ENCODE measurements at regions of chr5 and their contacts with region 1.

Region 1: DNA sequence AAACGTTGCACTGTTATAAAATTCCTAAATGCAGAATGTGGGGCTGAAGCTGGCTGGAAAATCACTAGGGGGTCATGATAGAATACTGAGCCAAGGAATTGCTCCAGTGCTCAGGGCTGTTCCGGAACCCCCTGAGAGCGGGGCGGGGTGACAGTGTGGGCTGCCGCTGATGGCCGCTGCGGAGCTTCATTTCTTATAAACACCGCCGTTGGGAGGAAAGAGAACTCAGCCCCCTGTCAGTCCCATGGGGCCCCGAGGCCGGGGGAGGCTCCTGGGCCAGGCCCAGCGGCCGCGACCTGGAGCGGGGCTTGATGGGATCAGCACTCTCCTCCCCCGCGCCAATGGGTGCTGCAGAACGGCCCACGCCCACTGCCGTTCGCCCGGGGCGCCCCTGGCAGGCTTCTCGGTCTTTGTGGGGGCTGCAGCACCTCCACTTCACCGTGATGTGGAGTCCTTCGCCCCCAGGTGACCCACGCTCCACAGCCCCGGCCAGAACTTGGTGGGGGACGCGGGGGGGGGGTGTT is 5.2 kb upstream of the IRF1 start:
- DNase-seq: peak; percentile 50
- H3K4me3 ChIP-seq: peak overlapping the region; percentile 11 to 39 (median 30)
- H3K27ac ChIP-seq: peak overlapping the region; percentile 56
- H3K4me1 ChIP-seq: peaks cover 30% of the 10 kb centered on the region
- H3K27me3 ChIP-seq: no peaks in the 10 kb centered on the region
- CTCF ChIP-seq: no peak
- POLR2A ChIP-seq: peak; percentile 50

Region 2: GRCh38 chr5:131877873-131878272 is 617.9 kb before region 1 on chr5:
- CTCF ChIA-PET with region 1: no interaction called
- POLR2A ChIA-PET with region 1: no interaction called
- dilution Hi-C with region 1: no loop called
- intact Hi-C with region 1: no loop called
- DNase-seq: no peak
- H3K4me3 ChIP-seq: no peak overlapping the region
- H3K27ac ChIP-seq: no peak overlapping the region
- H3K4me1 ChIP-seq: no peaks in the 10 kb centered on the region
- H3K27me3 ChIP-seq: peaks cover 0 to 4% of the 10 kb centered on the region in 2 experiments
- CTCF ChIP-seq: no peak
- POLR2A ChIP-seq: no peak

Region 3: GRCh38 chr5:132086277-132086794 is 409.4 kb before region 1 on chr5:
- CTCF ChIA-PET with region 1: no interaction called
- POLR2A ChIA-PET with region 1: no interaction called
- dilution Hi-C with region 1: no loop called
- intact Hi-C with region 1: loop called (anchors 1 kb)
- DNase-seq: peak; percentile 99
- H3K4me3 ChIP-seq: no peak overlapping the region
- H3K27ac ChIP-seq: peak overlapping the region; percentile 91
- H3K4me1 ChIP-seq: peaks cover 26% of the 10 kb centered on the region
- H3K27me3 ChIP-seq: no peaks in the 10 kb centered on the region
- CTCF ChIP-seq: no peak
- POLR2A ChIP-seq: no peak

Region 4: GRCh38 chr5:132260714-132261551 is 234.8 kb before region 1 on chr5:
- CTCF ChIA-PET with region 1: interaction called, 7 read pairs
- POLR2A ChIA-PET with region 1: no interaction called
- dilution Hi-C with region 1: no loop called
- intact Hi-C with region 1: loop called (anchors 1 kb)
- DNase-seq: peak; percentile 91
- H3K4me3 ChIP-seq: no peak overlapping the region
- H3K27ac ChIP-seq: peak overlapping the region; percentile 96
- H3K4me1 ChIP-seq: peaks cover 76% of the 10 kb centered on the region
- H3K27me3 ChIP-seq: no peaks in the 10 kb centered on the region
- CTCF ChIP-seq: no peak
- POLR2A ChIP-seq: no peak

Region 5: GRCh38 chr5:132419502-132420468 is 75.9 kb before region 1 on chr5:
- CTCF ChIA-PET with region 1: interaction called, 38 read pairs
- POLR2A ChIA-PET with region 1: interaction called, 6 read pairs
- dilution Hi-C with region 1: no loop called
- intact Hi-C with region 1: loop called (anchors 1 kb)
- DNase-seq: peak; percentile 90
- H3K4me3 ChIP-seq: no peak overlapping the region
- H3K27ac ChIP-seq: peak overlapping the region; percentile 6
- H3K4me1 ChIP-seq: peaks cover 41% of the 10 kb centered on the region
- H3K27me3 ChIP-seq: no peaks in the 10 kb centered on the region
- CTCF ChIP-seq: peak; percentile 77 to 83
- POLR2A ChIP-seq: no peak

Region 6: DNA sequence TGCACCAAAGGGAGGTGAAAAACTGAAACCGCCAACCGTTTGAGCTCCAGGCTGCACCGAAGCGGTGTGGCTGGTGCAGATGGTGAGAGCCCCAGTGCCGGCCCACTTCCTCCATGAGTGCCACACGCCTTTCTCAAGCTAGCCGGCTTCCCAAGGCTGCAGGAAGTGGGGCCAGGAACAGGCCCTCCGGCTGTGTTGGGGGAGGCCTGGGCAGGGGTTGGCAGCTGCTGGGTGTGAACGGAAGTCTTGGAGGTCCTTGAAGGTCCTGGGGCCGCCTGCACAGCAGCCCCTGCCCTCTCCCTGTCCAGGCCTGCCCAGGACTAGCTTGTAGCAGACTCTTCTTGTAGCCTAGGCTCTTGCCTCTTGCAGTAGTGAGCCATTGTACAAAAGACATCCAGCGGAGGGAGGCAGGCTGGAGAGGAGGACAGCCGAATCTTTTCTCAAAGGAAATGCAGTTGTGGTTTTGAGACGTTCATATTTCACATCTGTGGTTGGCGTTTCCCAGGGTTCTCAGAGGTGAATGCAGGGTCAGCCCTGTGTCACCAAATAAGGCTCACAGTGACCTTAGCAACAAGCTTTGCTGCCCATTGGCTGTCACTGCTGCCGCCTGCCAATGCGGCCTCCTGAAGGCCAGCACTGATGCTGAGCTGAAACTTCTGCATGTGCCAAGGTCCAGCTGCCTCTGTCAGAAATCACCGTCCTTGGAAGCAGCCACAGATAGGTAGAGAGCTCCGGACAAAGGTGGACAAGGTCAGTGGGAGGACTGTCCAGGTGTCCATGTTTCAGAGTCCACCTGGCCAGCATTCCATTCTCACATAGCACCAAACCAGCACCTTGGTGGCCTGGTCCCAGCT is 29.1 kb before region 1 on chr5:
- CTCF ChIA-PET with region 1: interaction called, 12 read pairs
- POLR2A ChIA-PET with region 1: interaction called, 10 read pairs
- dilution Hi-C with region 1: no loop called
- intact Hi-C with region 1: loop called (anchors 1 kb)
- DNase-seq: peak; percentile 79
- H3K4me3 ChIP-seq: no peak overlapping the region
- H3K27ac ChIP-seq: no peak overlapping the region
- H3K4me1 ChIP-seq: peaks cover 43% of the 10 kb centered on the region
- H3K27me3 ChIP-seq: no peaks in the 10 kb centered on the region
- CTCF ChIP-seq: no peak
- POLR2A ChIP-seq: no peak